Left ventricle myocardium superior (tissue), 1 donor: ENCODE measurements at regions of chr1 and their contacts with region 1.

Region 1: GRCh38 chr1:81549604-81550127 is 251.1 kb upstream of the ADGRL2 start:
- DNase-seq: no peak
- ATAC-seq: peak; percentile 80

Region 2: GRCh38 chr1:82562448-82562847 is 1012.8 kb after region 1 on chr1:
- intact Hi-C with region 1: loop called (anchors 5 kb)
- DNase-seq: no peak
- ATAC-seq: no peak